ENCODE measurements at regions of chr1 and their contacts with region 1.

Region 1: GRCh38 chr1:8987881-8988617 is 38.2 kb downstream of the SLC2A7 start:
- DNase-seq: peak; percentile 84
- ATAC-seq: peak; percentile 65
- H3K4me3 Mint-ChIP-seq: peak overlapping the region; percentile 32
- H3K27ac Mint-ChIP-seq: peak overlapping the region; percentile 84
- H3K4me1 Mint-ChIP-seq: peaks cover 62% of the 10 kb centered on the region
- H3K27me3 Mint-ChIP-seq: no peaks in the 10 kb centered on the region

Region 2: GRCh38 chr1:8925406-8925805 is 62.6 kb before region 1 on chr1:
- CTCF ChIA-PET with region 1: interaction called, 283 read pairs
- DNase-seq: no peak
- ATAC-seq: no peak
- H3K4me3 Mint-ChIP-seq: no peak overlapping the region
- H3K27ac Mint-ChIP-seq: no peak overlapping the region
- H3K4me1 Mint-ChIP-seq: peaks cover 33% of the 10 kb centered on the region
- H3K27me3 Mint-ChIP-seq: no peaks in the 10 kb centered on the region

Region 3: GRCh38 chr1:8947127-8947691 is 40.8 kb before region 1 on chr1:
- CTCF ChIA-PET with region 1: interaction called, 16 read pairs
- DNase-seq: no peak
- ATAC-seq: peak; percentile 17
- H3K4me3 Mint-ChIP-seq: no peak overlapping the region
- H3K27ac Mint-ChIP-seq: peak overlapping the region; percentile 97
- H3K4me1 Mint-ChIP-seq: peaks cover 82% of the 10 kb centered on the region
- H3K27me3 Mint-ChIP-seq: no peaks in the 10 kb centered on the region

Region 4: DNA sequence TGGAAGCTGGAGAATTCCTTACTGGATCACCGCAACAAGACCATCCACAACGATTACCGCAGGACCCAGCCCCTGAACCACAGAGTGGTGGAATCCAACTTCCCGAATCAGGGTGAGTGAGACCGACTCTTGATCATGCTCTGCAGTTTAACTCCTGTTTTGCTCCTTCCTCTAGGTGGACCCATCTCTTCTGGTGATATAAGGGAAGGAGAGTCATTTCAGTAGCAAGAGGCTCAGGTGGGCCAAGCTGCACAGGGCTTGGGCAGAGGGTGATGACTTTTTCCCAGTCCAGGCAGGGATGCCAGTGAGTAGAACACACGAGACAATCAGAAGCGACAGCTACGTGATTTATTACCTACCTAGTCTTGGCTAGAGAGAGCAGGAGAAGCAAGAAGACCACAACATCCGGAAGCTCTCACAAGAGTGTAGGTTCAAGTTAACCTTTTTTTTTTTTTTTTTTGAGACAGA is 17.1 kb before region 1 on chr1:
- CTCF ChIA-PET with region 1: interaction called, 93 read pairs
- DNase-seq: peak; percentile 78
- ATAC-seq: peak; percentile 87
- H3K4me3 Mint-ChIP-seq: peak overlapping the region; percentile 80
- H3K27ac Mint-ChIP-seq: peak overlapping the region; percentile 91
- H3K4me1 Mint-ChIP-seq: peaks cover 46% of the 10 kb centered on the region
- H3K27me3 Mint-ChIP-seq: no peaks in the 10 kb centered on the region

Region 5: DNA sequence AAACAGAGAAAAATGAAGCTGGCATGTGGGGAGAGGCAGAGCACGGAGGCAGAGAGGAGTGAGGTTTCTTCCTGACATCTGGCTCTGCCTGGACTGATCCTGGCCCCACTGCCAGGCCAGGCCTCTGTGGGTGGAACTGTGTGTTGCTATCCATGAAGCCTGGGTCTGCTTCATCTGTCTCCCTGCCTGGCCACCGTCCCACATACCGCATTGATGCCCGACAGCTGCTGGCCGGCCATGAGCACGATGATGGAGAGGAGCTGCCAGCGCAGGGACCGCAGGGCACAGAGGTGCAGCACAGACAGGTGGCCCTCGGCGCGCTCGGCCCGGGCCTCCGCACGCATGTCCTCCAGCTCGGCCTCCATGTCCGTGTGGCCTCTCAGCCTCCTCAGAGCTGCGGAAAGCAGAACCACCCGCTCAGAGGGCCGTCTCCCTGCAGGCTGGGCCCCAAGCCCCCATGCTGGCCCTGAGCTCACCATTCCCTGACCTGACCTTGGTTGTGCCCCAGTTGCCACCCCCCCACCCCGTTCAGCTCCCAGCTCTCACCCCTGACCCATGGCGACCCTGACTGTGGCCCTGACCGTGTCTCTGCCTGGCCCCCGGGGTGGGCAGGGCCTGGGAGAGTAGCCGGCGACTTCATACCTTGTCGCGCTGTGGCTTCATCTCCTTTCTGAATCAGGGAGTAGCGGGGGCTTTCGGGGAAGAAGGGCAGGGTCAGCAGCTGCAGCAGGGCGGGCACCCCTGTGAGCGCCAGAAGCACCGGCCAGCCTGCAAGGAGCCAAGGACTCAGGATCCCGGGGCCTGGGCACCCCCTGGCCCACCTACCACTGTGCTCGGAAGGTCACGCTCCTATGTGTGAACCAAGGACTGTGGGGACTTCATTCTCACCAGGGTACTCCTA is 26.7 kb after region 1 on chr1:
- CTCF ChIA-PET with region 1: no interaction called
- DNase-seq: no peak
- ATAC-seq: no peak
- H3K4me3 Mint-ChIP-seq: no peak overlapping the region
- H3K27ac Mint-ChIP-seq: no peak overlapping the region
- H3K4me1 Mint-ChIP-seq: peaks cover 6% of the 10 kb centered on the region
- H3K27me3 Mint-ChIP-seq: peaks cover 22% of the 10 kb centered on the region

Region 6: GRCh38 chr1:9037476-9038337 is 49.7 kb after region 1 on chr1:
- CTCF ChIA-PET with region 1: no interaction called
- DNase-seq: no peak
- ATAC-seq: no peak
- H3K4me3 Mint-ChIP-seq: no peak overlapping the region
- H3K27ac Mint-ChIP-seq: no peak overlapping the region
- H3K4me1 Mint-ChIP-seq: no peaks in the 10 kb centered on the region
- H3K27me3 Mint-ChIP-seq: peaks cover 5% of the 10 kb centered on the region

Region 7: GRCh38 chr1:9150582-9151327 is 162.7 kb after region 1 on chr1:
- CTCF ChIA-PET with region 1: no interaction called
- DNase-seq: no peak
- ATAC-seq: no peak
- H3K4me3 Mint-ChIP-seq: no peak overlapping the region
- H3K27ac Mint-ChIP-seq: no peak overlapping the region
- H3K4me1 Mint-ChIP-seq: no peaks in the 10 kb centered on the region
- H3K27me3 Mint-ChIP-seq: no peaks in the 10 kb centered on the region